Heart right ventricle (tissue), 16 donors: ENCODE measurements at regions of chr1 and their contacts with region 1.

Region 1: DNA sequence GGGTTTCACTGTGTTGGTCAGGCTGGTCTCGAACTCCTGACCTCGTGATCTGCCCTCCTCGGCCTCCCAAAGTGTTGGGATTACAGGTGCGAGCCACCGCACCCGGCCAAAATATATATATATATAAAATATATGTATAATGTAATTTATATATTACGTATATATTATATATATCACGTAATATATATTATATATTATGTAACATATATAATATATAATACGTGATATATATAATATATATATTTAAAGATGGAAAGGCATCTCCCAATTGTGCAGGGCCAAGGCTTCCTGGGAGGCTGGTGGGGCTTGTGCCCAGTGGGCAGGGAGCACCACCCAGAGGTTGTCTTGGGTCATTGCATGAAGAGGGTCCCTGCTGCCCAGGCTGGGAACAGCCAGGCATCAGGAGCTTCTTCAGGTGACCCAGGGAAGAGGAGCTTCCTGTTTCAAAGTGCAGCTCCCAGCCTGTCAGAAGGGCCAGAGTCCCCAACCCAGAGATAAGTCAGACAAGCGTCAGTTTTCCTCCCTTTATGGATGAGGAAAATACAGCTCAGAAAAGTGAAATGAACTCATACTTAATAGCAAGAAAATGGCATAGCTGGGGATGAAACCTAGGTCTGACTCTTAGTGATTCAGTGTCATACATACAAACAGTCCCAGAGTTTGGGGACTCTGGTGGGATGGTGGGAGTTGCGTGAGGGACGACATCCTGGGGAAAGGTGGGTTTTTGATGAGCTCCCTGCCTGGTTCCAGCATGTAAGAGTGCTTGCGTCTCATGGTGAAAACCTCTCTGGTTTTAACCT is 12.0 kb downstream of the UBE2Q1 start:
- DNase-seq: peak; percentile 49 to 51
- ATAC-seq: peak in 6 of 8 donors; percentile 70 to 80 (median 74)
- H3K4me3 ChIP-seq: no peak overlapping the region
- H3K27ac ChIP-seq: no peak overlapping the region
- H3K4me1 ChIP-seq: peaks cover 0 to 34% (median 19%) of the 10 kb centered on the region in 9 donors
- H3K27me3 ChIP-seq: no peaks in the 10 kb centered on the region
- CTCF ChIP-seq: peak; percentile 67 to 86 (median 83)

Region 2: DNA sequence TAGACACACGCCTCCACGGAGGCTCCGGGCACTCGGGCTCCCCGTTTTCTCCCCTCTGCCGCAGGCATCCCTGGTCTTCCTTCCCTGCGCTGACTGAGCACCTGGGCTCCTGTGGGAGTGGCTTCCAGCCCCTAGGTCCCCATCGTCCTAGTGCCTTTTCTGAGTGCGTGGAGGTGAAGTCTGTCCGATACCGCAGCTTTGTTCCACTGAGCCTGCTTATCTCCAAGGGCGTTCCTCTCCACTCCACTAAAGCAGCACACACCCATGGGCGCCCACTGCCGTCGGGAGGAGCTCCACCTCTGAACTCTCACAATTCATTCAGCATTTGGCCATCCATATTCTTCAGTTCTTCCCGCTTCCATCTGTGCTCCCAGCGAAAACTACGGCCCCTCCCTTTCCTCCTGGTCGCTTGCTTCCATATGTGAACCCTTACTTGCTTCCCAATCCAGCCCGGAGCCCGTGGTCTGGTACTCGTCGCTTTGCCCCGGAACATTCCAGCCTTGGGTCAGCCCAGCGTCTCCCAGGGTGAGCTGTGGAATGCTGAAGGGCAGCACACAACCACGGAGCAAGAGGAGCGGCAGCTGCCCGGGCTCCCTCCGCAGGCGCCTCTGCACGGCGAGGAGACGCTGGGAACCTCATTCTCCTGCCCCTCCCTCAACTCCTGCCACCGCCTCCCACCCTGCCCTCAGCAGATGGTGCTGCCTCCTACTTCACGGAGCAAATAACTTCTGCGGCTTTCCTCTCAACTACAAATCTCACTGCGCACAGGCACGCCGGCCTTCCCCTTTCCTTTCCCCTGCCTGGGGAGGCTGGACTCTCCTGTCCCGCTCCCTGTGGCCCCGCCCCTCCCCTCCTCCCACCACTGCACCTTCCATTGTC is 193.6 kb before region 1 on chr1:
- intact Hi-C with region 1: loop called in 2 of 10 experiments (anchors 10 kb)
- DNase-seq: peak; percentile 53 to 54
- ATAC-seq: peak; percentile 44 to 72 (median 66)
- H3K4me3 ChIP-seq: peak overlapping the region; percentile 29 to 56 (median 50)
- H3K27ac ChIP-seq: peak overlapping the region in 9 of 10 donors; percentile 22 to 75 (median 50)
- H3K4me1 ChIP-seq: peaks cover 4 to 28% (median 15%) of the 10 kb centered on the region in 9 donors
- H3K27me3 ChIP-seq: peaks cover 0 to 14% (median 0%) of the 10 kb centered on the region in 7 donors
- CTCF ChIP-seq: no peak

Region 3: GRCh38 chr1:154607609-154608396 is 61.3 kb after region 1 on chr1 and contains the start of gene ADAR:
- intact Hi-C with region 1: no loop called
- DNase-seq: peak; percentile 86 to 95
- ATAC-seq: peak; percentile 83 to 95 (median 94)
- H3K4me3 ChIP-seq: peak within 1 kb of the TSS; percentile 66 to 99 (median 90)
- H3K27ac ChIP-seq: peak within 1 kb of the TSS; percentile 87 to 99 (median 98)
- H3K4me1 ChIP-seq: peaks cover 4 to 82% (median 60%) of the 10 kb centered on the region in 9 donors
- H3K27me3 ChIP-seq: no peaks in the 10 kb centered on the region
- CTCF ChIP-seq: no peak
- total RNA-seq, gene ADAR: 45.3 to 103 (median 55.3) TPM

Region 4: GRCh38 chr1:155250633-155251449 is 704.4 kb after region 1 on chr1:
- intact Hi-C with region 1: no loop called
- DNase-seq: peak; percentile 93 to 95
- ATAC-seq: peak; percentile 80 to 89 (median 84)
- H3K4me3 ChIP-seq: peak overlapping the region in 7 of 10 donors; percentile 12 to 57 (median 37)
- H3K27ac ChIP-seq: peak overlapping the region in 8 of 10 donors; percentile 15 to 90 (median 38)
- H3K4me1 ChIP-seq: peaks cover 12 to 36% (median 29%) of the 10 kb centered on the region in 9 donors
- H3K27me3 ChIP-seq: no peaks in the 10 kb centered on the region
- CTCF ChIP-seq: peak in 8 of 9 donors; percentile 99 to 100 (median 100)